Breast epithelium (tissue), 4 donors: ENCODE measurements at regions of chr15 and their contacts with region 1.

Region 1: DNA sequence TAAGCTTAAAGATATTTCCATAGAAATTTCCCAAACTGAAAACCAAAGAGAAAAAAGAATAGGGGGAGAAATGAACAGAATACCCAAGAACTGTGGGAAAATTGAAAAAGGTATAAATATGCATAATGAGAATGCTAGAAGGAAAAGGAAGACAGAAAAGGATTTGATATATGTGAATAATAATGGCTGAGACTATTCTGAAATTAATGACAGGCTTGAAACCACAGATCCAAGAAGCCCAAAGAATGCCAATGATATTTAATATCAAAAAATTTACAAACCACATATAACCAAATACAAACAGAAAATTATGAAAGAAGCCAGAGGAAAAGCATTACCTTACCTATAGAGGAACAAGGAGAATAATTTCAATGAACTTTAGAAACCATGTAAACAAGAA is 153.0 kb downstream of the ANXA2 start:
- DNase-seq: no peak
- H3K4me3 ChIP-seq: no peak overlapping the region
- H3K27ac ChIP-seq: no peak overlapping the region
- H3K4me1 ChIP-seq: no peaks in the 10 kb centered on the region
- H3K27me3 ChIP-seq: no peaks in the 10 kb centered on the region
- CTCF ChIP-seq: no peak
- POLR2A ChIP-seq: no peak

Region 2: GRCh38 chr15:59924812-59925522 is 319.8 kb before region 1 on chr15:
- intact Hi-C with region 1: loop called (anchors 5 kb)
- DNase-seq: no peak
- H3K4me3 ChIP-seq: no peak overlapping the region
- H3K27ac ChIP-seq: no peak overlapping the region
- H3K4me1 ChIP-seq: no peaks in the 10 kb centered on the region
- H3K27me3 ChIP-seq: peaks cover 0 to 6% of the 10 kb centered on the region in 2 donors
- CTCF ChIP-seq: no peak
- POLR2A ChIP-seq: no peak